ENCODE measurements at regions of chr6 and their contacts with region 1.

Region 1: GRCh38 chr6:34560366-34561226 is 4.5 kb upstream of the SPDEF start:
- DNase-seq: peak; percentile 89
- ATAC-seq: peak; percentile 78
- H3K4me3 ChIP-seq: peak overlapping the region; percentile 12 to 61 (median 20); a peak in 3 of 6 replicates
- H3K27ac ChIP-seq: no peak overlapping the region
- H3K4me1 ChIP-seq: peaks cover 44% of the 10 kb centered on the region
- H3K27me3 ChIP-seq: peaks cover 13 to 47% of the 10 kb centered on the region in 2 experiments; a peak in 4 of 5 replicates
- CTCF ChIP-seq: peak; percentile 80
- EP300 ChIP-seq: 0 out of 4 replicates have a peak, but pooled peaks of 1 of the 2 experiments have one; percentile 9
- POLR2A ChIP-seq: no peak
- RAD21 ChIP-seq: peak; percentile 77

Region 2: DNA sequence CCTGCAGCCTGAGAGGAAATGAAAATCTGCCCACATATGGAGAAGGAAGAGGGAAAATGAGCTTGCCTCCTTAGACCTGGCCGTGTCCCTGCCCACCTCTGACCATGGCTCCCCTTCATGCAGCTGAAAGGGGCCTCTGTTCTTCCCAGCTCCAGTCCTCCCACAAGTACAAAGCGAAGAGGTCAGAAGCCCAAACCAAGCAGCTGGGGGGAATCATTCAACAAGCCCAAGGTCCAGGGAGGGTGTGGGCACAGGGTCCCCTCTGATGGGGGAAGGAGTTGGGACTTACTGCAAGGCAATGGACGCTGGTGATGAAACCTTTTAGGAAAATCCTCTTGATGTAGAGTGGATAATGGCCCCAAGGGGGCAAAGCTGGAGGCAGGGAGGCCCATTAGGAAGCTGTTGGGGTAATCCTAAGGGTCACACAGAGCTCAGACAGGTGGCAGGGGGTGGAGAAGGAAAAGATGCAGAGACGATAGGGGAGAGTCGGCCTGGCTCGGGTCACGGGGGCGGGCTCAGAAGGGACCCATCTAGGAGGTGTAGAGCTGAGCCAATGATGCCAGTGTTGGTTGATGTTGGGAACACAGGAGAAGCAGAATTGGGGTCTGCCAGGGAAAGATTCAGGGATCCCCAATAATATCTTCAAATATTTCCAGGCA is 398.6 kb before region 1 on chr6:
- CTCF ChIA-PET with region 1: no interaction called
- POLR2A ChIA-PET with region 1: no interaction called
- in situ Hi-C with region 1: no loop called
- intact Hi-C with region 1: loop called (anchors 5 kb)
- DNase-seq: no peak
- ATAC-seq: no peak
- H3K4me3 ChIP-seq: no peak overlapping the region
- H3K27ac ChIP-seq: no peak overlapping the region
- H3K4me1 ChIP-seq: peaks cover 8% of the 10 kb centered on the region; the same call in 1 of the 2 replicates
- H3K27me3 ChIP-seq: peaks cover 0 to 17% of the 10 kb centered on the region in 2 experiments; a peak in 3 of 5 replicates
- CTCF ChIP-seq: no peak
- EP300 ChIP-seq: no peak
- POLR2A ChIP-seq: no peak
- RAD21 ChIP-seq: no peak

Region 3: GRCh38 chr6:34491091-34491430 is 69.5 kb before region 1 on chr6:
- CTCF ChIA-PET with region 1: no interaction called
- POLR2A ChIA-PET with region 1: no interaction called
- in situ Hi-C with region 1: no loop called
- intact Hi-C with region 1: no loop called
- DNase-seq: no peak
- ATAC-seq: no peak; the same call in 2 of the 3 replicates
- H3K4me3 ChIP-seq: no peak overlapping the region
- H3K27ac ChIP-seq: no peak overlapping the region
- H3K4me1 ChIP-seq: peaks cover 9% of the 10 kb centered on the region; the same call in 1 of the 2 replicates
- H3K27me3 ChIP-seq: peaks cover 1 to 40% of the 10 kb centered on the region in 2 experiments; a peak in 3 of 5 replicates
- CTCF ChIP-seq: no peak
- EP300 ChIP-seq: no peak
- POLR2A ChIP-seq: no peak
- RAD21 ChIP-seq: no peak

Region 4: GRCh38 chr6:34526992-34527728 is 33.4 kb before region 1 on chr6:
- CTCF ChIA-PET with region 1: no interaction called
- POLR2A ChIA-PET with region 1: no interaction called
- in situ Hi-C with region 1: no loop called
- intact Hi-C with region 1: loop called (anchors 1 kb)
- DNase-seq: peak; percentile 86
- ATAC-seq: peak; percentile 90
- H3K4me3 ChIP-seq: peak overlapping the region; percentile 37 to 70 (median 42)
- H3K27ac ChIP-seq: no peak overlapping the region
- H3K4me1 ChIP-seq: peaks cover 36% of the 10 kb centered on the region
- H3K27me3 ChIP-seq: peaks cover 10 to 54% of the 10 kb centered on the region in 2 experiments; a peak in 4 of 5 replicates
- CTCF ChIP-seq: peak; percentile 98
- EP300 ChIP-seq: no peak
- POLR2A ChIP-seq: no peak
- RAD21 ChIP-seq: peak; percentile 94

Region 5: GRCh38 chr6:34538581-34538980 is 22.0 kb before region 1 on chr6:
- CTCF ChIA-PET with region 1: no interaction called
- POLR2A ChIA-PET with region 1: no interaction called
- in situ Hi-C with region 1: no loop called
- intact Hi-C with region 1: no loop called
- DNase-seq: no peak
- ATAC-seq: no peak
- H3K4me3 ChIP-seq: no peak overlapping the region
- H3K27ac ChIP-seq: no peak overlapping the region
- H3K4me1 ChIP-seq: peaks cover 4% of the 10 kb centered on the region; the same call in 1 of the 2 replicates
- H3K27me3 ChIP-seq: peaks cover 16 to 67% of the 10 kb centered on the region in 2 experiments
- CTCF ChIP-seq: no peak
- EP300 ChIP-seq: no peak
- POLR2A ChIP-seq: no peak
- RAD21 ChIP-seq: no peak

Region 6: DNA sequence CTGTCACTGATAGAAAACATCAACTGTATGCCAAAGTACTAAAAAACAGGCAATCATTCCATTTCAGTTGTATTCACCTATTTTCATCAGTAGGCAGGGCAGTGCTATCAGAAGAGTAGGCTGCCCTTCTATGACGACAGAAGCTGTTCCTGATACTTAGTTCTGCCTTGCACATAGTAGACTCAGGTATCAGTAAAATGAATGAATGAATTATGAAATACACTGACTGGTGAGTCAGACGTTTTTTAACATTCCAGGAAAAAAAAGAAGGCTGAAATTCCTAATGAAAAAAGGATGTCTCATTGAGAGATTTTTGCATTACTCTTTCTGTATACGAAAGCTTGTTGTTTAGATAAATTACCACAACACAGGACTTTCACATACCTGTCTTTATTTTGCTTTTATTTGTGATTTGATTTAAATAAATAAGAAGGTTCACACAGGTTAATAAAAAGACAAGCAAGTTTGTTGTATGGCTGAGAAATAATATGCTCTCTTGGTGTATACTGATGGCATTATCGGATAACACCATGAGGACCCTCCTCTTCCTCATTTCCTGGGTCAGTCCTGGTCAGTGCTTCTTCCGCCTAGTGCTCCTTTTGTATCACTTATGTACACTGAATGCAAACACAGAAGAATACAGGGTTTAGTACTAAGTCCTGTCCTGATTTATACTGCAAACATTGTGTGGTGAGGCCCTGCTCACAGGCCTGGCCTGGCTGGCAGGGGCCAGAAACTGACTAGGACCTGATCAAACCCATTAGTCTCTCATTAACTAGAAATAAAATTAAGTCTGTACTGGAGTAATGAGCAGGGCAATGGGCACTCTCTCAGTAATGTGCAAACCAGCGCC is 35.0 kb after region 1 on chr6:
- CTCF ChIA-PET with region 1: no interaction called
- POLR2A ChIA-PET with region 1: no interaction called
- in situ Hi-C with region 1: no loop called
- intact Hi-C with region 1: loop called (anchors 5 kb)
- DNase-seq: no peak
- ATAC-seq: peak; percentile 44
- H3K4me3 ChIP-seq: no peak overlapping the region
- H3K27ac ChIP-seq: no peak overlapping the region
- H3K4me1 ChIP-seq: peaks cover 36% of the 10 kb centered on the region
- H3K27me3 ChIP-seq: no peaks in the 10 kb centered on the region
- CTCF ChIP-seq: no peak
- EP300 ChIP-seq: no peak
- POLR2A ChIP-seq: no peak
- RAD21 ChIP-seq: no peak